Posterior vena cava (tissue), 2 donors: ENCODE measurements at regions of chr10 and their contacts with region 1.

Region 1: DNA sequence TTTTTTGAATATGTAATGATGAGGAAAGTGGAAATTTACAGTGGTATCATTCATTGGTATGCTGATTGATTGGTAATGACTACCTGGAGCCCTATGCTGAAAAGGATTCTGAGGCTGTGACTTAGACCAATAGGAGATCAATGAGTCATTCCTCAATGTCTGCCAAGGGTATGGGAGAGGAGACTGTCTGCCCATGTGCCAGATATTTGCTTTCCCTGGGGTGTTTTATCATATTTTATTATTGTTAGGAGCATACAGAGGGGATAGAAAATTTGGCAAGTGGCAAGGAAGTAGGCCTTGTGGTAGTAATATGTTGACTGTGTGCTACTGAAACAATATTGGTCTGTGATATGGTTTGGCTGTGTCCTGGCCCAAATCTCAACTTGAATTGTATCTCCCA is 54.8 kb downstream of the ASAH2B start:
- DNase-seq: no peak

Region 2: DNA sequence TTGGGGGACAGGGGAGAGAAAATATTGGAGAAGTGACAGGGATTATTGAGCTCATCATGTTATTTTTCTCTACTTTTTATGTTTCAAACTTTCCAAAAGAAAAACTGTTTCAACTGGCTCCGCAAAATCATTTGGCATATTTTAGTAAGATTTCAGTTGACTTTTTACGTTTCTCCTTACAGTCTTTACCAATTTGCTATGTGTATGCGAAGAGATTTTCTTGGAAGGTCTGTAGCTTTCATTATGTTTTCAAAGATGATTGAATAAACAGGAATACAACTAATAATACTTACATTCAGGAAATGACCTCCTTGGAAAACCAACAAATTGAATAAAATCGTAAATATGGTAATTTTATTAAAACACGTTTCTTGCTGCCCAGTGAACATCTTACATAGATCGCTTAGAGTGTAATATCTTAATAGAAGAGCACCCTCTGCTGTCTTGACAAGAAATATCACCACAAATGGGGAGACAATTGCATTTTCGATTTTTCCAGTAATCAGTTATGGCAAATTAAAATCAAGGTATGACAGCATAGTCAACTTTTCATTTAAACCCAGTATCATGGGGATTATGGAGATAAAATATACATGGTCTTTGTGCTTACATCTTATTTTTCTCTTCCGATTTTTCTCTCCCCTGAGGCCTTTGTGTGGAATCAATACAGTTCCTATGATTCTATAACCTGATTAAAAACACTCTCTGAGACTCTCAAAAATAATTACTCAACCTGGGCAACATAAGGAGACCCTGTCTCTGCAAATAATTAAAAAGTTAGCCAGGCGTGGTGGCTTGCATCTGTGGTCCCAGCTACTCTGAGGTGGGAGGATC is 1935.0 kb after region 1 on chr10:
- intact Hi-C with region 1: loop called in 1 of 2 experiments (anchors 5 kb)
- DNase-seq: no peak